ENCODE measurements at regions of chr1 and their contacts with region 1.

Region 1: GRCh38 chr1:156608036-156608674 is 6.9 kb upstream of the GPATCH4 start:
- DNase-seq: peak; percentile 78
- H3K4me3 ChIP-seq: no peak overlapping the region
- H3K27ac ChIP-seq: no peak overlapping the region
- H3K4me1 ChIP-seq: no peaks in the 10 kb centered on the region
- H3K27me3 ChIP-seq: peaks cover 6 to 9% of the 10 kb centered on the region in 2 experiments
- CTCF ChIP-seq: peak; percentile 71 to 78
- POLR2A ChIP-seq: no peak

Region 2: GRCh38 chr1:156456622-156457465 is 151.3 kb before region 1 on chr1:
- CTCF ChIA-PET with region 1: interaction called, 5 read pairs
- POLR2A ChIA-PET with region 1: no interaction called
- dilution Hi-C with region 1: no loop called
- intact Hi-C with region 1: loop called (anchors 1 kb)
- DNase-seq: peak; percentile 95
- H3K4me3 ChIP-seq: peak overlapping the region; percentile 11 to 73 (median 31)
- H3K27ac ChIP-seq: peak overlapping the region; percentile 80
- H3K4me1 ChIP-seq: peaks cover 11% of the 10 kb centered on the region
- H3K27me3 ChIP-seq: peaks cover 6 to 10% of the 10 kb centered on the region in 2 experiments
- CTCF ChIP-seq: no peak
- POLR2A ChIP-seq: peak; percentile 80

Region 3: GRCh38 chr1:156577550-156577949 is 30.6 kb before region 1 on chr1:
- CTCF ChIA-PET with region 1: interaction called, 104 read pairs
- POLR2A ChIA-PET with region 1: interaction called, 3 read pairs
- dilution Hi-C with region 1: no loop called
- intact Hi-C with region 1: loop called (anchors 5 kb)
- DNase-seq: no peak
- H3K4me3 ChIP-seq: no peak overlapping the region
- H3K27ac ChIP-seq: no peak overlapping the region
- H3K4me1 ChIP-seq: no peaks in the 10 kb centered on the region
- H3K27me3 ChIP-seq: peaks cover 5 to 6% of the 10 kb centered on the region in 2 experiments
- CTCF ChIP-seq: no peak
- POLR2A ChIP-seq: no peak

Region 4: DNA sequence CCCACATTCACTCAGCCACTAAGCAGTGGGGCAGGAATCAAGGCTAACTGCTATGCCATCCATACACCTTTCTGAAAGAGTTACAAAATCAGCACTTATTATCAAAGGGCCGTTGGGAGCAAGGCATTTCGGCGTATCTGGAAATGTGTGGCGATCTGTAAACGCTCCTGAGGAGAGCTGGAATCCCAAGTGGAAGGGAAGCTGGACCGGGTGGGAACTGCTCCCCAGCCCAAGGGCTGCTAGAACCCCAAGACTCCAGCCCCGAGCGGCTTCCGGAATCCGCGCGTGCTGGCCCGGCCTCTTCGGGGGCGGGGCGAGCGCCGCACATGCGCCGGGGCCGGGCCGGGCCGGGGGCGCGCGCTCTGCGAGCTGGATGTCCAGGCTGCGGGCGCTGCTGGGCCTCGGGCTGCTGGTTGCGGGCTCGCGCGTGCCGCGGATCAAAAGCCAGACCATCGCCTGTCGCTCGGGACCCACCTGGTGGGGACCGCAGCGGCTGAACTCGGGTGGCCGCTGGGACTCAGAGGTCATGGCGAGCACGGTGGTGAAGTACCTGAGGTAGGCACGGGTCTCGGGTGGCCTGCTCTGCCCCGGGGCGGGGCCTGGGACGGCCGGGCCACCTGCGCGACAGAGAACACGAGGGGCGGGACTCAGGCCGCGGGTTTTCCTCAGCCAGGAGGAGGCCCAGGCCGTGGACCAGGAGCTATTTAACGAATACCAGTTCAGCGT is 16.6 kb before region 1 on chr1 and contains the start of gene NAXE:
- CTCF ChIA-PET with region 1: interaction called, 104 read pairs
- POLR2A ChIA-PET with region 1: interaction called, 6 read pairs
- dilution Hi-C with region 1: no loop called
- intact Hi-C with region 1: no loop called
- DNase-seq: peak; percentile 67
- H3K4me3 ChIP-seq: peak within 1 kb of the TSS; percentile 52 to 77 (median 75)
- H3K27ac ChIP-seq: peak within 1 kb of the TSS; percentile 32
- H3K4me1 ChIP-seq: peaks cover 17% of the 10 kb centered on the region
- H3K27me3 ChIP-seq: no peaks in the 10 kb centered on the region
- CTCF ChIP-seq: no peak
- POLR2A ChIP-seq: peak; percentile 93
- total RNA-seq, gene NAXE: 74.0 and 76.2 TPM in 2 replicates

Region 5: GRCh38 chr1:156625436-156626078 is 17.4 kb after region 1 on chr1:
- CTCF ChIA-PET with region 1: interaction called, 27 read pairs
- POLR2A ChIA-PET with region 1: interaction called, 5 read pairs
- dilution Hi-C with region 1: no loop called
- intact Hi-C with region 1: no loop called
- DNase-seq: peak; percentile 47
- H3K4me3 ChIP-seq: no peak overlapping the region
- H3K27ac ChIP-seq: no peak overlapping the region
- H3K4me1 ChIP-seq: peaks cover 10% of the 10 kb centered on the region
- H3K27me3 ChIP-seq: peaks cover 36% of the 10 kb centered on the region in 2 experiments
- CTCF ChIP-seq: peak; percentile 69 to 90
- POLR2A ChIP-seq: no peak